ENCODE measurements at regions of chr11 and their contacts with region 1.

Region 1: GRCh38 chr11:114280696-114281095 is 15.5 kb upstream of the NNMT start:
- DNase-seq: peak; percentile 57
- H3K4me3 ChIP-seq: no peak overlapping the region
- H3K27ac ChIP-seq: no peak overlapping the region
- H3K4me1 ChIP-seq: peaks cover 20% of the 10 kb centered on the region
- H3K27me3 ChIP-seq: no peaks in the 10 kb centered on the region
- CTCF ChIP-seq: peak; percentile 72 to 76

Region 2: GRCh38 chr11:113587308-113587739 is 693.4 kb before region 1 on chr11:
- CTCF ChIA-PET with region 1: interaction called, 12 read pairs
- dilution Hi-C with region 1: no loop called
- in situ Hi-C with region 1: no loop called
- intact Hi-C with region 1: no loop called
- DNase-seq: peak; percentile 50
- H3K4me3 ChIP-seq: no peak overlapping the region
- H3K27ac ChIP-seq: no peak overlapping the region
- H3K4me1 ChIP-seq: no peaks in the 10 kb centered on the region
- H3K27me3 ChIP-seq: no peaks in the 10 kb centered on the region
- CTCF ChIP-seq: peak in 1 of 2 donors; percentile 10

Region 3: GRCh38 chr11:114243461-114244372 is 37.0 kb before region 1 on chr11:
- CTCF ChIA-PET with region 1: no interaction called
- dilution Hi-C with region 1: no loop called
- in situ Hi-C with region 1: no loop called
- intact Hi-C with region 1: no loop called
- DNase-seq: no peak
- H3K4me3 ChIP-seq: no peak overlapping the region
- H3K27ac ChIP-seq: no peak overlapping the region
- H3K4me1 ChIP-seq: no peaks in the 10 kb centered on the region
- H3K27me3 ChIP-seq: no peaks in the 10 kb centered on the region
- CTCF ChIP-seq: no peak

Region 4: DNA sequence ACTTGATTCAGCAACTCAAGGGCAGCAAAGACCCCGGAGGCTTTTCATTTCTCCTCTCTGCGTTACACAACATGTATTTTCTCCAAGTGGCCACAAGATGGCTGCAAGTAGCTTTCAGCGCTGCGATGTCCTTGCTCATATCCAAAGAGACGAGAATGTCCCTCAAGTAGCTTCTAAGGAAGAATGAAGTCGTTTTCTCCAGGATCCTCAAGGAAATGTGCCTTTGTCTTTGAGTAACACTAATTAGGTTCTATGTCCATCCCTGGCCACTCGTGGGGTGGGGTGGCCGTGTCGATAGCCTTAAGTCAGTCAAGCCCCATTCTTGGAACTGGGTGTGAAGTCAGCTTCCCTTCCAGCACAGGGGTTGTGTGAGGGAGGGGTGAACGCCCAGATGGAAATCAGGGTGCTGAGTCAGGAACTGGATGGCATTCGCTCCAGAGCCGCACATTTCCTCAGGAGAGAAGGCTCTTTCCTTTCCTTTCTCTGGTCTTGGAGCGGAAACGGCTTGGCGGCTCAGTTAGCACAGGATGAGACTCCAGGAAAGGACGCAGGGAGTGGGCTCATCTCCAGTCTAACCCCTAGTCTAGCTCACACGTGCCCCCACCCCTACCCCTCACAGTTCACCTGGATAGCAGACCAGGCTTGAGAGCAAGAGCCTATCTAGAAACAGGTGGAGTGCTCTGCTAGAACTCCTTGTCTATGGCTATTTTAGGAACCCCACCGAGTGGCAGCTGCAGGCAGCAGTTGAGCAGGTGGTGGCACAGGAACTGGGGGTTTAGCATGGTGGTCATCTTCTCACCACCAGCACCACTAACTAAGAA is 59.8 kb after region 1 on chr11:
- CTCF ChIA-PET with region 1: no interaction called
- dilution Hi-C with region 1: loop called (anchors 5 kb)
- in situ Hi-C with region 1: no loop called
- intact Hi-C with region 1: loop called (anchors 1 kb)
- DNase-seq: peak; percentile 57
- H3K4me3 ChIP-seq: peak overlapping the region in 2 of 3 experiments; percentile 9 to 17
- H3K27ac ChIP-seq: no peak overlapping the region
- H3K4me1 ChIP-seq: peaks cover 4% of the 10 kb centered on the region
- H3K27me3 ChIP-seq: no peaks in the 10 kb centered on the region
- CTCF ChIP-seq: peak; percentile 75 to 84

Region 5: GRCh38 chr11:114400217-114400914 is 119.7 kb after region 1 on chr11 and contains the starts of genes C11orf71 and RBM7:
- CTCF ChIA-PET with region 1: no interaction called
- dilution Hi-C with region 1: no loop called
- in situ Hi-C with region 1: loop called in 1 of 2 experiments (anchors 25 kb)
- intact Hi-C with region 1: loop called (anchors 1 kb)
- DNase-seq: peak; percentile 99
- H3K4me3 ChIP-seq: peak within 1 kb of the TSS; percentile 77 to 91 (median 89)
- H3K27ac ChIP-seq: peak within 1 kb of the TSS; percentile 99
- H3K4me1 ChIP-seq: peaks cover 4% of the 10 kb centered on the region
- H3K27me3 ChIP-seq: no peaks in the 10 kb centered on the region
- CTCF ChIP-seq: peak in 1 of 2 donors; percentile 9
- total RNA-seq, gene C11orf71: 1.2 to 2.0 TPM
- total RNA-seq, gene RBM7: 37.5 to 42.8 TPM

Region 6: DNA sequence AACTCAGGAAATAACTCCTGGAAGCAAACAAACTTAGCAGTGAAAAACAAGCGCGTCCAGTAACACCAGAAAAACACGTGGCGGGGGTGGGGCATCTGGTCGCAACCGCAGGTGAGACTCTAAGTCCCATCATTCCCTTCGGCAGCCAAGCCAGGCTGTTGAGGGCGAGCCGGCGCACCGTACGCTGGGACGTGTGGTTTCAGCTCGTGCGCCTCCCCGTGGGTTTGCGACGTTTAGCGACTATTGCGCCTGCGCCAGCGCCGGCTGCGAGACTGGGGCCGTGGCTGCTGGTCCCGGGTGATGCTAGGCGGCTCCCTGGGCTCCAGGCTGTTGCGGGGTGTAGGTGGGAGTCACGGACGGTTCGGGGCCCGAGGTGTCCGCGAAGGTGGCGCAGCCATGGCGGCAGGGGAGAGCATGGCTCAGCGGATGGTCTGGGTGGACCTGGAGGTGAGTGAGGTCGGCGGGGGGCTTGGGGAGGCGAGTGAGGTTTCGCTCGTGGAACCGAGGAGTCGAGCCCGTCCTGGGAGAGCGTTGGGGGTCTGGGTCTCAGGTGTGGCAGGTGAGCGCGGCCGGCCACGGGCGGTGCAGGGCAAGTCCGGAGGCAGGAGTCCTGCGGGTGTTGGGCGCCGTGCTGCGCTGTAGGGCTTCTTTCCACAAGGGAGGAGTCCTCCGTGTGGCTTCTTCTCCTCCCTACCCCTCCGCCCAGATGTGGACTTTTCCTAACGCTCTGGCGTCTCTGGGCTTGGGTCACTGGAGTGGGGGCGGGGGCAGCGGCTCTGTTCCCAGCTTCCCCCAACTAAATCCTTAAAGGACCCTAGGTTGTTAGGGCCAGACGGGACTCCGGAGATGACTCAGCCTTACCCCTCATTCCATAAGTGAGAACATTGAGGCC is 158.8 kb after region 1 on chr11 and contains the start of gene REXO2:
- CTCF ChIA-PET with region 1: no interaction called
- dilution Hi-C with region 1: no loop called
- in situ Hi-C with region 1: no loop called
- intact Hi-C with region 1: loop called (anchors 1 kb)
- DNase-seq: peak; percentile 95
- H3K4me3 ChIP-seq: peak within 1 kb of the TSS; percentile 95 to 100 (median 100)
- H3K27ac ChIP-seq: peak within 1 kb of the TSS; percentile 68
- H3K4me1 ChIP-seq: peaks cover 18% of the 10 kb centered on the region
- H3K27me3 ChIP-seq: no peaks in the 10 kb centered on the region
- CTCF ChIP-seq: peak; percentile 11 to 61
- total RNA-seq, gene REXO2: 119 to 180 TPM

Region 7: DNA sequence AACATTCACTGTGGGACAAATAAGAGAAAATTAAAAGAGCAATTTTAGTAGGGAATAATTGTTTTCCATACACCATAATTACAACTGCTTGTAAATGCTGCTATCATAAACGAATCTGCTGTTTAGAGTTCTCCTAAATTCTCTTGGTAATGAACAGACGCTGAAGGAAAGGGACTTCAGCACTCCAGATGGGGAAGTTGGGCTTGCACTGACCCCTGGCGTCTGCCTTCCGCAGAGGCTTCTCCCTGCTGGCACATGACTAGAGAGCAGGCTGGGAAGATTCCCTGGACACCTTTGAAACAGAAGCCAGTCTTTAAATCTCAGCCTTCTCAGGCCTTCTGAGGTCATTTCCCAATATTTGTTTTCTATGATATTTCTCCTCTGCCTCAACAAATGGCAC is 481.7 kb after region 1 on chr11:
- CTCF ChIA-PET with region 1: no interaction called
- dilution Hi-C with region 1: no loop called
- in situ Hi-C with region 1: no loop called
- intact Hi-C with region 1: loop called (anchors 1 kb)
- DNase-seq: peak; percentile 20
- H3K4me3 ChIP-seq: no peak overlapping the region
- H3K27ac ChIP-seq: no peak overlapping the region
- H3K4me1 ChIP-seq: no peaks in the 10 kb centered on the region
- H3K27me3 ChIP-seq: no peaks in the 10 kb centered on the region
- CTCF ChIP-seq: peak; percentile 44 to 68

Measured in mammary epithelial cell (primary cell).